ENCODE measurements at regions of chr7 and their contacts with region 1.

Region 1: DNA sequence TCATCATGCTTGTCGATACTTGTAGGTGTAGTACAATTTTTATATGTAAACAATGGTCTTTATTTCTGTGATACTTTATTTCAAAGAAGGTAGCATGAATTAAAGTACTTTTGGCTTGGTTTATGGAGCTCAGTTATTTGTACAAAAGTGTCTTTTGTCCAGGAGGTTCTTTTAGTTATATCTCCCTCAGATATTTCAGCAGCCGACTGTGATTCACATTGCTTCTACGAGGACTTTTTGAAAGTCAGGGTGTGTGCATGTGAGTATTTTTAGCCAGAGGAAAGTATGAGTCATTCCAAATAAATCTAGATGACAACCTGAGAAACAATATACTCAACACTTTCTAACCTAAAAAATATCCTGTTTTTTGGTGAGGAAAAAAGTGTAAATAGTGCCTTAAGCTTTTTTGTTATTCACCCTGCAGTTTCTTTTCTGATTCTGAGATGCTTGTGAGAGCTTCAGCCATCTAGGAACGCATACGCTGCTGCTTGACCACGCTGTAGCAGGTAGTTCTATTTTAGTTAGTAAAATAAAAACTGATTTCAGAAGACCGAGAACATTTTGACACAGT is 595 bp upstream of the SUN1 start:
- DNase-seq: peak; percentile 30
- ATAC-seq: peak; percentile 51
- H3K4me3 Mint-ChIP-seq: peak overlapping the region; percentile 48
- H3K27ac Mint-ChIP-seq: peak overlapping the region; percentile 82
- H3K4me1 Mint-ChIP-seq: peaks cover 44% of the 10 kb centered on the region
- H3K27me3 Mint-ChIP-seq: no peaks in the 10 kb centered on the region

Region 2: DNA sequence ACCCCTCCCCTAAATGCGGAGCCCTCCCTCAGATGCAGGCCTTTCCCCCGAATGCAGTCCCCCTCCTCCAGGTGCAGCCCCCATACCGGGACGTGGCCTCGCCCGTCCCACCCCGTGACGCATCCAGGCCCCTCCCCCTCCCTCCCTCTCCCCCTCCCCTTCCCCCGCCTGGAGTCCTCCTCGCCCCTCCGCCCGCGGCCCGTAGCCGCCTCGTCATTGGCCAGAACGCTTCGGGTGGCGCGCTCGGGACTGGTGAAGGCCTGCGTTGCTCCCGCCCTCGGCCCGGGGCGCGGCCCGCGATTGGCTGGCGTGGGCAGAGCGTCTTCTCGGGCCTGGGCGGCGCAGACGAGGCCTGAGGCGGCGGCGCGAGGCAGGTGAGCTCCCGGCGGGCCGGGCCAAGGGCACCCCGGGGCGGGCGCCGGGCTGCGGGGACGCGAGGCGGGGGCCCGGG is 15.4 kb before region 1 on chr7:
- CTCF ChIA-PET with region 1: interaction called, 24 read pairs
- POLR2A ChIA-PET with region 1: interaction called, 9 read pairs
- DNase-seq: peak; percentile 97
- ATAC-seq: peak; percentile 98
- H3K4me3 Mint-ChIP-seq: peak overlapping the region; percentile 57
- H3K27ac Mint-ChIP-seq: no peak overlapping the region
- H3K4me1 Mint-ChIP-seq: peaks cover 46% of the 10 kb centered on the region
- H3K27me3 Mint-ChIP-seq: peaks cover 29% of the 10 kb centered on the region